AG04449 (cell line): ENCODE measurements at regions of chr15 and their contacts with region 1.

Region 1: DNA sequence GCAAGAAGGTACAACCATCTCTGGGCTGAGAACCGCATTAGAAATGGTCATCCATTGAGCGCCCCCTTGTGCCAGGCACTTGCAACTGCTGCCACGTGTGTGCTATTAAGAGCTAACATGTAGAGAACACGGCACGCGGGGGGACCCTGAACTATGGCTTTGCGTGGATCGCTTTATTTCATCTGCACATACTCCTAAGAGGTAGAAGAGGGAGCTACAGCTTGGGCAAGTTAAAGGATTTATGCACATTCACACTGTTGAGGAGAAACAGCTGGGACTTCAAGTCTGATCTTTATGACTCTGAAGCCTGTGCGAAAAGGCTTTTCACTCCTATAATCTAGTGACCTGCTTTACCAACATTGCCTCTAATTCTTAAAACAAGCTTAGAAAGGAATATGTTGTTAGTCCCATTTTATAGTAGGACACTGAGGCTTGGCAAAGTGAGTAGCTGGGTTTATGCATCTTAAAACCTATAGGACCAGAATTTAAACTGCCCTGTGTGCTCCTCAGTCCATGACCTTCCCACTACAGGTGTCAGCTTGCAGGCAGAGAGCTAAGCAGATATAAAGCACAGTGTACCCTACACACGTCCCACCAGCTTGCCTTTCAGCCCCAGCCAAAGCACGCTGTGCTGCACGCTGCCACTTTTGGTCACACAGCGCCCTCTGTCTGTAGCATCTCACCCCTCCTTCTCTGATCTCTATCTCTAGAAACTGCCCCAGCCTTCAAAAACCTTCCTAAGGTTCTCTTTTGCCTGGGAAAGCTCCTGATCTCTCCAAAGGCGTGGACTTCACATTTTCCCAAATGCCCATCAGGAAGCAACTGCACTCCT is 57.8 kb downstream of the STARD5 start:
- DNase-seq: no peak
- H3K4me3 ChIP-seq: peak overlapping the region; percentile 23
- CTCF ChIP-seq: peak; percentile 89

Region 2: GRCh38 chr15:80773122-80773551 is 493.0 kb before region 1 on chr15:
- CTCF ChIA-PET with region 1: no interaction called
- POLR2A ChIA-PET with region 1: no interaction called
- DNase-seq: peak; percentile 77
- H3K4me3 ChIP-seq: no peak overlapping the region
- CTCF ChIP-seq: no peak

Region 3: GRCh38 chr15:80970018-80970658 is 296.0 kb before region 1 on chr15:
- CTCF ChIA-PET with region 1: interaction called, 142 read pairs
- POLR2A ChIA-PET with region 1: no interaction called
- DNase-seq: no peak
- H3K4me3 ChIP-seq: no peak overlapping the region
- CTCF ChIP-seq: peak; percentile 63

Region 4: GRCh38 chr15:81029414-81030300 is 236.5 kb before region 1 on chr15:
- CTCF ChIA-PET with region 1: interaction called, 12 read pairs
- POLR2A ChIA-PET with region 1: no interaction called
- DNase-seq: no peak
- H3K4me3 ChIP-seq: no peak overlapping the region
- CTCF ChIP-seq: no peak

Region 5: GRCh38 chr15:81133782-81134461 is 132.2 kb before region 1 on chr15 and contains the start of gene CFAP161:
- CTCF ChIA-PET with region 1: interaction called, 30 read pairs
- POLR2A ChIA-PET with region 1: no interaction called
- DNase-seq: no peak
- H3K4me3 ChIP-seq: peak within 1 kb of the TSS; percentile 50
- CTCF ChIP-seq: no peak

Region 6: GRCh38 chr15:81221449-81221848 is 44.7 kb before region 1 on chr15:
- CTCF ChIA-PET with region 1: interaction called, 10 read pairs
- POLR2A ChIA-PET with region 1: no interaction called
- DNase-seq: no peak
- H3K4me3 ChIP-seq: no peak overlapping the region
- CTCF ChIP-seq: no peak

Region 7: GRCh38 chr15:81323944-81324881 is 58.1 kb after region 1 on chr15 and contains the start of gene STARD5:
- CTCF ChIA-PET with region 1: interaction called, 14 read pairs
- POLR2A ChIA-PET with region 1: no interaction called
- DNase-seq: peak; percentile 70
- H3K4me3 ChIP-seq: peak within 1 kb of the TSS; percentile 92
- CTCF ChIP-seq: no peak

Region 8: GRCh38 chr15:81555346-81555745 is 289.2 kb after region 1 on chr15:
- CTCF ChIA-PET with region 1: no interaction called
- POLR2A ChIA-PET with region 1: no interaction called
- DNase-seq: no peak
- H3K4me3 ChIP-seq: no peak overlapping the region
- CTCF ChIP-seq: no peak